Colonic mucosa (tissue), 4 donors: ENCODE measurements at regions of chr5 and their contacts with region 1.

Region 1: GRCh38 chr5:55407059-55407684 is 99.4 kb downstream of the MTREX start:
- DNase-seq: no peak
- H3K4me3 ChIP-seq: no peak overlapping the region
- H3K27ac ChIP-seq: no peak overlapping the region
- H3K4me1 ChIP-seq: no peaks in the 10 kb centered on the region
- H3K27me3 ChIP-seq: no peaks in the 10 kb centered on the region
- CTCF ChIP-seq: peak; percentile 54

Region 2: DNA sequence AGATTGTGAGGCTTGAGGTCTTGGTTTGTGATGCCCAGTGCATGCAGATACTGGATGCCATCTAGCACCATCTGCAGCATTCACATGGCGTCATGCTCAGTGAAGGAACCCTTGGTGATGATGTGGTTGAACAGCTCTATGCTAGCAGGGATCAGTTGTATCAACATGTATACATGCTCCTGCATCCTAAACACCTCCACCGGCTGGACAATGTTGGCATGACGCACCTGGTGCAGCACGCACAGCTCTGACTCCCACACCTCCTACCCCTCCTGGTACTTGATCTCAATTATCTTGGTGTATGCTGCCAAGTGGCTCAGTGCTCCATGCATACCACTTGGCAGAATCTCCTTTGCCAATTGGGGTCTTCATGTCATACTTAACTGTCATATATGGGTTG is 50.3 kb before region 1 on chr5:
- intact Hi-C with region 1: loop called (anchors 5 kb)
- DNase-seq: no peak
- H3K4me3 ChIP-seq: no peak overlapping the region
- H3K27ac ChIP-seq: no peak overlapping the region
- H3K4me1 ChIP-seq: no peaks in the 10 kb centered on the region
- H3K27me3 ChIP-seq: no peaks in the 10 kb centered on the region
- CTCF ChIP-seq: no peak

Region 3: DNA sequence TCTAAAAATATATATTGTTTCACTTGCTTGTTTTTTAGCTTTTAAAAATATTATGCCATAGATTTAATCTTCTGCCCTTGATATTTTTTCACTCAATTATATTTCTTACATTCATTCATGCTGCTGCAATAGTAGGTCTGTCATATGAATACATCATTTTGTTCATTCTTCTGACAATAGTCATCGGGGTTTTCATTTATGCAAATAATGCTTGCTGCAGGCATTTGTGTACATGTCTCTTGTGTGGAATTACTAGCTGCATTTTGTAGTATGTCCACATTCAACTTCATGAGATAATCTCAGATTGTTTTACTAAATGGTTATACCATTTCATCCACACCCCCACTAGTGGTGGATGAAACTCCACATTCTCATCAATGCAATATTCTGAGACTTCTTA is 132.9 kb after region 1 on chr5:
- intact Hi-C with region 1: loop called (anchors 10 kb)
- DNase-seq: no peak
- H3K4me3 ChIP-seq: no peak overlapping the region
- H3K27ac ChIP-seq: no peak overlapping the region
- H3K4me1 ChIP-seq: no peaks in the 10 kb centered on the region
- H3K27me3 ChIP-seq: no peaks in the 10 kb centered on the region
- CTCF ChIP-seq: no peak

Region 4: DNA sequence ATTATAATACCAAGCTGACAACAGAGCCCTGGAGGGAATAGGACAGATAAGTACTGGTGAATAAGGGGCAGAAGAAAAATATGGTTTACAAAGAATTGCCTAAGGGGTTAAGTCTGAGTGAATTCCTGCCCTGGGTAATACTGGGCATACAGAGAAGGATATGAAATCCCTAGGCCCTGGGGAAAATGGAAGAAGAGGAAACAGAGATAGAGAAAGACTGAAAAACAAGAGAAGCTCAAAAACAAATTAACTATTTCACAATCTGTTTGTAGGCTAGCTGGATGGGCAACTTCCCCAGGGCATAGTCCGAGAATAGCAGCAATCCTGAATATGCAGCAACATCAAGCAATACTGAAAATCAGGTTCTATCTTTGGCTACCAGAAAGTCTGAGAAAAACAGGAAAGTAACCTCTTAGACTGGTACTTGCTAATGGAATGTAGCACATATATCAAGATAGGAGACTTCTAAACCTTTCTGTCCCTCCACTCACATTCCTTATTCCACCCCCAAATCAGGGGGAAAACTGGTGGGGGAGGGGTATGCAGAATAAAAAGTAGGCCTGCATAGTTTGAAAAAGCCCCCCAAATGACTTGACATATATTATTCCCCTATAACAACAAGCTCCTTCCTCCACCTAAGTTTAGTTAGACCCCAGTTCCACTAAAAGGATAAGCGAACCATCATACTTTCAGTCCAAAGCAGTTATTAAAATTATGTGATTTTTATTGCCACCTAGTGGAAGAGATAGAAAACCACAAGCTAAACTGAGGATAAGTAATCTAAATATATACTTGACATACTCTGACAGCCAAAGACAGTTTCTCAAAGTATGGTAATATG is 284.3 kb after region 1 on chr5:
- intact Hi-C with region 1: loop called (anchors 2 kb)
- DNase-seq: no peak
- H3K4me3 ChIP-seq: no peak overlapping the region
- H3K27ac ChIP-seq: no peak overlapping the region
- H3K4me1 ChIP-seq: no peaks in the 10 kb centered on the region
- H3K27me3 ChIP-seq: no peaks in the 10 kb centered on the region
- CTCF ChIP-seq: peak; percentile 67